ENCODE measurements at regions of chr15 and their contacts with region 1.

Region 1: GRCh38 chr15:82139823-82140268 is 94.0 kb upstream of the MEX3B start:
- DNase-seq: peak; percentile 66
- H3K4me3 Mint-ChIP-seq: no peak overlapping the region
- H3K27ac Mint-ChIP-seq: peak overlapping the region; percentile 1
- H3K4me1 Mint-ChIP-seq: peaks cover 8% of the 10 kb centered on the region
- H3K27me3 Mint-ChIP-seq: no peaks in the 10 kb centered on the region
- CTCF ChIP-seq: peak; percentile 59

Region 2: GRCh38 chr15:82197733-82198594 is 58.1 kb after region 1 on chr15:
- CTCF ChIA-PET with region 1: interaction called, 5 read pairs
- POLR2A ChIA-PET with region 1: no interaction called
- intact Hi-C with region 1: loop called (anchors 1 kb)
- DNase-seq: peak; percentile 82
- H3K4me3 Mint-ChIP-seq: no peak overlapping the region
- H3K27ac Mint-ChIP-seq: no peak overlapping the region
- H3K4me1 Mint-ChIP-seq: peaks cover 6% of the 10 kb centered on the region
- H3K27me3 Mint-ChIP-seq: no peaks in the 10 kb centered on the region
- CTCF ChIP-seq: peak; percentile 83

Region 3: DNA sequence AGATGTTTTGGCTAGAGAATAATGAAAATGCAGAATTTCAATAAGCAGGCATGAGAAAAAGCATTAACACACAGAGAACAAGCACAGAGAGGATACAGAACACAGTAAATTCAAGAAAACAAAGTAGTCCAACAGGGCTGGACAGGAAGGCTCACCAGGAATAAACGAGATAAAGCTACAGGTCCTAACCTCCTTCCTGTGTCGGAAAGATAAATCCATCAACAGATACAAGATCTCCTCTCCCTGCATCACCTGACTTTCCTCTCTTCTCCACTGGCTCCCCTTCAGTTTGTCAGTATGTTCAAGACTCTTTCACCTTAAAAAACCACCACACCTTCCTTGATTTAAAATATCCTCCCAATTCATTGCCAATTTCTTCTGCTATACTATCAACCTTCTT is 496.0 kb after region 1 on chr15:
- CTCF ChIA-PET with region 1: no interaction called
- POLR2A ChIA-PET with region 1: no interaction called
- intact Hi-C with region 1: no loop called
- DNase-seq: no peak
- H3K4me3 Mint-ChIP-seq: no peak overlapping the region
- H3K27ac Mint-ChIP-seq: no peak overlapping the region
- H3K4me1 Mint-ChIP-seq: no peaks in the 10 kb centered on the region
- H3K27me3 Mint-ChIP-seq: peaks cover 60% of the 10 kb centered on the region
- CTCF ChIP-seq: no peak